CD8-positive, alpha-beta T cell (primary cell): ENCODE measurements at regions of chr7 and their contacts with region 1.

Region 1: GRCh38 chr7:100563809-100564400 is 9.8 kb downstream of the SAP25 start:
- DNase-seq: peak; percentile 76 to 93 (median 82)
- ATAC-seq: peak; percentile 83
- H3K4me3 ChIP-seq: no peak overlapping the region
- H3K4me3 Mint-ChIP-seq: no peak overlapping the region
- H3K27ac ChIP-seq: no peak overlapping the region
- H3K27ac Mint-ChIP-seq: no peak overlapping the region
- H3K4me1 ChIP-seq: peaks cover 31% of the 10 kb centered on the region
- H3K4me1 Mint-ChIP-seq: peaks cover 30% of the 10 kb centered on the region
- H3K27me3 ChIP-seq: no peaks in the 10 kb centered on the region
- H3K27me3 Mint-ChIP-seq: no peaks in the 10 kb centered on the region
- CTCF ChIP-seq: peak; percentile 85

Region 2: GRCh38 chr7:100469227-100470044 is 94.5 kb before region 1 on chr7:
- CTCF ChIA-PET with region 1: interaction called, 211 read pairs
- POLR2A ChIA-PET with region 1: interaction called, 5 read pairs
- intact Hi-C with region 1: loop called (anchors 1 kb)
- DNase-seq: peak; percentile 71 to 93 (median 86)
- ATAC-seq: peak; percentile 97
- H3K4me3 ChIP-seq: no peak overlapping the region
- H3K4me3 Mint-ChIP-seq: no peak overlapping the region
- H3K27ac ChIP-seq: peak overlapping the region in 1 of 2 experiments; percentile 20
- H3K27ac Mint-ChIP-seq: peak overlapping the region; percentile 73
- H3K4me1 ChIP-seq: peaks cover 25% of the 10 kb centered on the region
- H3K4me1 Mint-ChIP-seq: peaks cover 34% of the 10 kb centered on the region
- H3K27me3 ChIP-seq: no peaks in the 10 kb centered on the region
- H3K27me3 Mint-ChIP-seq: no peaks in the 10 kb centered on the region
- CTCF ChIP-seq: peak; percentile 84

Region 3: GRCh38 chr7:100516135-100516812 is 47.6 kb before region 1 on chr7:
- CTCF ChIA-PET with region 1: interaction called, 20 read pairs
- POLR2A ChIA-PET with region 1: no interaction called
- intact Hi-C with region 1: no loop called
- DNase-seq: peak; percentile 36 to 87 (median 61)
- ATAC-seq: peak; percentile 92
- H3K4me3 ChIP-seq: peak overlapping the region in 1 of 2 experiments; percentile 5
- H3K4me3 Mint-ChIP-seq: peak overlapping the region; percentile 73
- H3K27ac ChIP-seq: peak overlapping the region in 1 of 2 experiments; percentile 9
- H3K27ac Mint-ChIP-seq: peak overlapping the region; percentile 83
- H3K4me1 ChIP-seq: peaks cover 30% of the 10 kb centered on the region
- H3K4me1 Mint-ChIP-seq: peaks cover 42% of the 10 kb centered on the region
- H3K27me3 ChIP-seq: peaks cover 0 to 3% of the 10 kb centered on the region in 2 experiments
- H3K27me3 Mint-ChIP-seq: no peaks in the 10 kb centered on the region
- CTCF ChIP-seq: no peak

Region 4: GRCh38 chr7:100545360-100546128 is 18.4 kb before region 1 on chr7:
- CTCF ChIA-PET with region 1: interaction called, 86 read pairs
- POLR2A ChIA-PET with region 1: interaction called, 13 read pairs
- intact Hi-C with region 1: no loop called
- DNase-seq: peak in 6 of 9 experiments; percentile 53 to 65 (median 57)
- ATAC-seq: peak; percentile 75
- H3K4me3 ChIP-seq: peak overlapping the region; percentile 0 to 21
- H3K4me3 Mint-ChIP-seq: peak overlapping the region; percentile 72
- H3K27ac ChIP-seq: peak overlapping the region; percentile 17 to 84
- H3K27ac Mint-ChIP-seq: peak overlapping the region; percentile 91
- H3K4me1 ChIP-seq: peaks cover 91% of the 10 kb centered on the region
- H3K4me1 Mint-ChIP-seq: peaks cover 91% of the 10 kb centered on the region
- H3K27me3 ChIP-seq: no peaks in the 10 kb centered on the region
- H3K27me3 Mint-ChIP-seq: no peaks in the 10 kb centered on the region
- CTCF ChIP-seq: no peak

Region 5: GRCh38 chr7:100586266-100587025 is 22.5 kb after region 1 on chr7 and contains the start of gene FBXO24:
- CTCF ChIA-PET with region 1: interaction called, 210 read pairs
- POLR2A ChIA-PET with region 1: interaction called, 17 read pairs
- intact Hi-C with region 1: loop called in 1 of 2 experiments (anchors 1 kb)
- DNase-seq: peak; percentile 98 to 100 (median 99)
- ATAC-seq: peak; percentile 80
- H3K4me3 ChIP-seq: peak within 1 kb of the TSS; percentile 93 to 96
- H3K4me3 Mint-ChIP-seq: peak within 1 kb of the TSS; percentile 96
- H3K27ac ChIP-seq: peak within 1 kb of the TSS; percentile 74 to 94
- H3K27ac Mint-ChIP-seq: peak within 1 kb of the TSS; percentile 57
- H3K4me1 ChIP-seq: peaks cover 22% of the 10 kb centered on the region
- H3K4me1 Mint-ChIP-seq: peaks cover 39% of the 10 kb centered on the region
- H3K27me3 ChIP-seq: no peaks in the 10 kb centered on the region
- H3K27me3 Mint-ChIP-seq: peaks cover 3% of the 10 kb centered on the region
- CTCF ChIP-seq: no peak
- total RNA-seq, gene FBXO24: 0.30 to 0.53 TPM

Region 6: DNA sequence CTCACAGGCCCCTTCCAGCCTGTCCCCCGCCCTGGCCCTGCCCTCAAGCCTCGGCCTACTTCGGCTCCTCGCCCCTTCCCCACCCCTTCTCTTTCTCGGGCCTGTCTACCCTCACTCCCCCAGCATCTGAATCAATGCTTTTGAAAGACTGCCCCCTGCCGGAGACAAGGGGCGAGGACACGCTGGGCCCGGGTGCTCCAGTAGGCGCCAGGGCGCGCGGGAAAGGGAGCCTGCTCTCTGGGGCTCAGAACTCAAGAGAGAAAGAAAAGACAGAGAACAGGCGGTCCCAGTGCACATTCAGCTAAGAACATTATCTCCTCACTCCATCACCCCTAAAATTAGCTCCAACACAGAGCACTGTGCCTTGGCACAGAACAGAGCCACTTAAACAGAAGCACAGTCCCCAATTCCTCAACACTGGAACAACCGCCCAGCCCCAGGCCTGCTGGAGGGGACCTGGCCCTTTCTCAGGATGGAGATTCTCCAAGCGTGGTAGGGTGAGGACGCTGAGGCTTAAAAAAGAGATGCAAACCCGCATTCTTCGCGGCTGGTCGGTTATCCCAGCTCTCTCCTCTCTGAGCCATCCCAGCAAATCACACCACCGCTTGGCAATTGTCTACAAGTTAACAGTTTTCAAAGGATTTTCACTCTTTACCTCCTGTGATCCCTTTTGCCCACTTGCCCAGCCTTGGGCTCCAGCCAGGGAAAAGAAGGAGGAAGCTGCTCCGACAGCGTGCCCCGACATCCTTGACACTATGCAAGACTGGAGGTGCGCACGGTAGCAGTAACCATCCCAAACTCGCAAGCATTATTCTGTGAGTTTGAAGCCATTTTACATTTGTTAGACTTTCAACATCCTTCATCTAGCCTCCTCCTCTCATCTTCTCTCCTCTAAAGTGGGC is 128.0 kb after region 1 on chr7:
- CTCF ChIA-PET with region 1: interaction called, 103 read pairs
- POLR2A ChIA-PET with region 1: interaction called, 4 read pairs
- intact Hi-C with region 1: loop called (anchors 1 kb)
- DNase-seq: peak; percentile 63 to 88 (median 82)
- ATAC-seq: peak; percentile 71
- H3K4me3 ChIP-seq: peak overlapping the region in 1 of 2 experiments; percentile 72
- H3K4me3 Mint-ChIP-seq: peak overlapping the region; percentile 94
- H3K27ac ChIP-seq: no peak overlapping the region
- H3K27ac Mint-ChIP-seq: peak overlapping the region; percentile 90
- H3K4me1 ChIP-seq: peaks cover 53% of the 10 kb centered on the region
- H3K4me1 Mint-ChIP-seq: peaks cover 42% of the 10 kb centered on the region
- H3K27me3 ChIP-seq: no peaks in the 10 kb centered on the region
- H3K27me3 Mint-ChIP-seq: no peaks in the 10 kb centered on the region
- CTCF ChIP-seq: peak; percentile 83

Region 7: GRCh38 chr7:100825830-100826513 is 262.1 kb after region 1 on chr7:
- CTCF ChIA-PET with region 1: no interaction called
- POLR2A ChIA-PET with region 1: no interaction called
- intact Hi-C with region 1: no loop called
- DNase-seq: no peak
- ATAC-seq: no peak
- H3K4me3 ChIP-seq: no peak overlapping the region
- H3K4me3 Mint-ChIP-seq: peak overlapping the region; percentile 76
- H3K27ac ChIP-seq: no peak overlapping the region
- H3K27ac Mint-ChIP-seq: no peak overlapping the region
- H3K4me1 ChIP-seq: peaks cover 18% of the 10 kb centered on the region
- H3K4me1 Mint-ChIP-seq: peaks cover 21% of the 10 kb centered on the region
- H3K27me3 ChIP-seq: peaks cover 9 to 26% of the 10 kb centered on the region in 2 experiments
- H3K27me3 Mint-ChIP-seq: peaks cover 28% of the 10 kb centered on the region
- CTCF ChIP-seq: no peak